CD4-positive, alpha-beta T cell (primary cell): ENCODE measurements at regions of chr5 and their contacts with region 1.

Region 1: GRCh38 chr5:59174248-59174844 is 591.5 kb downstream of the RAB3C start:
- DNase-seq: peak in 9 of 14 experiments; percentile 7 to 80 (median 26)
- ATAC-seq: peak; percentile 80
- H3K4me3 ChIP-seq: no peak overlapping the region
- H3K4me3 Mint-ChIP-seq: no peak overlapping the region
- H3K27ac ChIP-seq: no peak overlapping the region
- H3K27ac Mint-ChIP-seq: no peak overlapping the region
- H3K4me1 ChIP-seq: no peaks in the 10 kb centered on the region
- H3K4me1 Mint-ChIP-seq: peaks cover 5% of the 10 kb centered on the region
- H3K27me3 ChIP-seq: no peaks in the 10 kb centered on the region
- H3K27me3 Mint-ChIP-seq: no peaks in the 10 kb centered on the region
- CTCF ChIP-seq: peak; percentile 91

Region 2: DNA sequence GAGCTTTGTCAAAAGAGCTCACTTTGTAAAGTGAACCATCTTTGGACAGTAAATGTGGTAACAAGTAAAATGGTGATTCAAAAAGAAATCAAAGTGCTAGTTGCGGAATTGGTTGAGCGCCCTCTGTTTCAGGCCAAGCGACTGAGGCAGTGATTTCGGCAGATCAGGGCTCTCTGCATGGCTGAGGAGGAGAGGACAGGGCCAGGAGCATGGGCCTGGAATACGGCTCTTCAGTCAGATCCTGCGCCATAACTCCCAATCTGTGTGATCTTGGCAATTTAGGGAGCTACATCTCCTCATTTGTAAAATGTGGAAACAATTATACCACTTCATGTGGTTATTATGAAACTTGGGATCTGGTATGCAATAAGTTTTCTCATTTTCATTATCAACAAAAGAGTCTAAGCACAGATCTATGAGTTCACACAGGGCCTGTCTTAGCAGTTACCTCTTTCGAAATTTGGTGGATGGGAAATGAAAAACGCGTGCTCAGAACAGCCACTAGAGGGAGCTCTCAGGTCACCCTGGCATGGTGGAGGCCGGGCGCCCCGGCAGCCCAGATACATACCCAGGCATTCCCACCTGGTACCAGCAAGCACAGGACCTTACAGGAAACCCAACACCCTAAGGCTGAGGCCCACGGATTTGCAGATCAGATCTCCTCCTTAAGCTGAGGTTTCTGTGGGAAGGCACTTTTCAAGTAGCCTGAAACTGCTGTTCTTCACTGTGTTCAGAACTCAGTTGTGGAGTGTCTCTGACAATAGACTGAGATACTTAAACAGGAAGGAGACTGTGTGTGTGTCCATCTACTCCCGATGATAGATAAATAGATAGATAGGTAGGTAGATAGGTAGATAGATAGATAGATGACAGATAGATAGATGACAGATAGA is 287.8 kb before region 1 on chr5:
- CTCF ChIA-PET with region 1: interaction called, 17 read pairs
- POLR2A ChIA-PET with region 1: interaction called, 4 read pairs
- intact Hi-C with region 1: loop called (anchors 1 to 2 kb)
- DNase-seq: peak; percentile 36 to 83 (median 52)
- ATAC-seq: peak; percentile 81
- H3K4me3 ChIP-seq: no peak overlapping the region
- H3K4me3 Mint-ChIP-seq: no peak overlapping the region
- H3K27ac ChIP-seq: no peak overlapping the region
- H3K27ac Mint-ChIP-seq: no peak overlapping the region
- H3K4me1 ChIP-seq: peaks cover 20% of the 10 kb centered on the region
- H3K4me1 Mint-ChIP-seq: peaks cover 32% of the 10 kb centered on the region
- H3K27me3 ChIP-seq: peaks cover 0 to 4% of the 10 kb centered on the region in 2 experiments
- H3K27me3 Mint-ChIP-seq: peaks cover 5% of the 10 kb centered on the region
- CTCF ChIP-seq: peak; percentile 92

Region 3: DNA sequence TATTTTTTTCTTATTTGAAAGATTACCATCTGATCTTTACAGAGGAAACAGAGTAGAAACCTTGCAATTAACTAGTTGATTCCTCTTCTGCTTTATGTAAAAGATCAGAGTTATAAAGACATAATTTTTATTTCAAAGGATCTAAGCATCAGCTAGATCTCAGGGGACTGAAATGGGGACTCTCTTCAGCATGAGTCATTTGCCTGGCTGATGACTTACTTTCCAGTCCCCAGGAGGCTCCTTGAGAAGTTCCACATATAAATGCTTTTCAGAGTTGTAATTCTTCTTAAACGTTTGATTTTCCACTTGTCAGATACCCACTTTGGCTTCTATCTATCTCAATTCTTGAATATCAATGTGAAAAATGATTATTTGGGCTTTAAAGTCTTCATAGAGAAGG is 202.0 kb before region 1 on chr5:
- CTCF ChIA-PET with region 1: interaction called, 6 read pairs
- POLR2A ChIA-PET with region 1: no interaction called
- intact Hi-C with region 1: loop called in 1 of 2 experiments (anchors 5 kb)
- DNase-seq: no peak
- ATAC-seq: peak; percentile 19
- H3K4me3 ChIP-seq: no peak overlapping the region
- H3K4me3 Mint-ChIP-seq: no peak overlapping the region
- H3K27ac ChIP-seq: no peak overlapping the region
- H3K27ac Mint-ChIP-seq: no peak overlapping the region
- H3K4me1 ChIP-seq: no peaks in the 10 kb centered on the region
- H3K4me1 Mint-ChIP-seq: no peaks in the 10 kb centered on the region
- H3K27me3 ChIP-seq: no peaks in the 10 kb centered on the region
- H3K27me3 Mint-ChIP-seq: no peaks in the 10 kb centered on the region
- CTCF ChIP-seq: no peak

Region 4: DNA sequence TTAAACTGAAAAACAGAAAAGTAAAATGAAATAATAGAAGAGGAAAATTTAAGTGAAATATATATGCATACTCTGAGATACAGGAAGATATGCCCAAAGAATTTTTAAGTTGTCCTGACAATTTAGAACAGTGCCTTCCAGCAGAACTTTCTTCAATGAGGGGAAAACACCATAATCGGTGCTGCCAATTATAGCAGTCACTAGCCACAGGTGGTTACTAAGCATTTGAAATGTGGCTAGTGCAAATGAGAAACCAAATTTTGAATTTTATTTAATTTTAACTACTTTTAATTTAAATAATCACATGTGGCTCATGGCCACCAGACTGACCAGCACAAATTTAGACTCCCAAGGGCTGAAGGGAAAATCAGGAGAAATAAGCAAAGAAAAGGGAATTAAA is 180.9 kb before region 1 on chr5:
- CTCF ChIA-PET with region 1: interaction called, 4 read pairs
- POLR2A ChIA-PET with region 1: no interaction called
- intact Hi-C with region 1: loop called in 1 of 2 experiments (anchors 5 kb)
- DNase-seq: no peak
- ATAC-seq: no peak
- H3K4me3 ChIP-seq: no peak overlapping the region
- H3K4me3 Mint-ChIP-seq: no peak overlapping the region
- H3K27ac ChIP-seq: no peak overlapping the region
- H3K27ac Mint-ChIP-seq: no peak overlapping the region
- H3K4me1 ChIP-seq: no peaks in the 10 kb centered on the region
- H3K4me1 Mint-ChIP-seq: peaks cover 11% of the 10 kb centered on the region
- H3K27me3 ChIP-seq: no peaks in the 10 kb centered on the region
- H3K27me3 Mint-ChIP-seq: no peaks in the 10 kb centered on the region
- CTCF ChIP-seq: no peak

Region 5: GRCh38 chr5:59099270-59099994 is 74.9 kb before region 1 on chr5:
- CTCF ChIA-PET with region 1: interaction called, 3 read pairs
- POLR2A ChIA-PET with region 1: no interaction called
- intact Hi-C with region 1: loop called in 1 of 2 experiments (anchors 5 kb)
- DNase-seq: peak in 10 of 14 experiments; percentile 2 to 86 (median 20)
- ATAC-seq: peak; percentile 90
- H3K4me3 ChIP-seq: no peak overlapping the region
- H3K4me3 Mint-ChIP-seq: no peak overlapping the region
- H3K27ac ChIP-seq: peak overlapping the region in 1 of 2 donors; percentile 51
- H3K27ac Mint-ChIP-seq: peak overlapping the region; percentile 37
- H3K4me1 ChIP-seq: peaks cover 13% of the 10 kb centered on the region
- H3K4me1 Mint-ChIP-seq: peaks cover 35% of the 10 kb centered on the region
- H3K27me3 ChIP-seq: no peaks in the 10 kb centered on the region
- H3K27me3 Mint-ChIP-seq: no peaks in the 10 kb centered on the region
- CTCF ChIP-seq: no peak

Region 6: DNA sequence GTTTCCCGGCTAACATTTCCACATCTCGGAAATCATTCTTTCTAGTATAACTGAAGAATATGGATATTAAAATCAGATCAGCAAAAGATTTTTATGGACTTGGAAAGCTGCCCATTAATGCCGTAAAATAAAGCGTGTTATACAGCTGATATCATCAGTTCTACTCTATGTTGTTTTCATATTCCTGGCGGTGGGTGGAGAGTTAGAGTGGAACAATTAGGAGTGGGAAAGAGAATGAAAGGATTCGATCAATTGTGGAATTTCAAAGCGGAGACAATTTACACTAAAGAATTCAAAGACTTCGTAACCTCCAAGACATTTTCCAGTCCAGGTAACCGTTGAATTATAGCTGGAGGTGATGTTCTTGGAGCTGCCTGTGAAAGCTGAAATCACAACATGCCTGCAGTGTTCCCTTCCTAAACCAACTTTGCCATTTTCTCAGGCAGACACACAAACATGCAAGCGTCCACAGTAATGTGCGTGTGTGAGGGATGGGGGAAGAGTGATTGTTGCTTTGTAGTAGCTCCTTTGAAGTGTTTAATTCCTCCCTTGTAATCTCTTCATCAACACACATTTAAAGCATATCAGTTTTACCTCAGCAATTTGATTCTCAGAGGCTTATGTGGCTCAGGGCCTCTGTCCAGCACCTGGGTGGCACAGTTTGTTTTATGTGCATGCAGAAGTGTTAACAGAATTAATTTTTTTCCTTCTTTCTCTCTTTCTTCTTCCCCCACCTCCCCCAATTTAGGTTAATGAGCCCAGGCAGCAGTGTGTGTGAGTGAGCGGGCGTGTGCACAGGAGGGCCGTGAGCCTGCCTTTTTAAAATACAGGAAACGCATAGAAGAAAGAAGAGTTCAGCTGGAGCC is 47.4 kb before region 1 on chr5:
- CTCF ChIA-PET with region 1: interaction called, 19 read pairs
- POLR2A ChIA-PET with region 1: interaction called, 20 read pairs
- intact Hi-C with region 1: loop called (anchors 1 to 2 kb)
- DNase-seq: peak in 3 of 14 experiments; percentile 5 to 81 (median 75)
- ATAC-seq: peak; percentile 5
- H3K4me3 ChIP-seq: peak overlapping the region; percentile 51
- H3K4me3 Mint-ChIP-seq: no peak overlapping the region
- H3K27ac ChIP-seq: peak overlapping the region; percentile 56 to 68
- H3K27ac Mint-ChIP-seq: no peak overlapping the region
- H3K4me1 ChIP-seq: peaks cover 36% of the 10 kb centered on the region
- H3K4me1 Mint-ChIP-seq: peaks cover 13% of the 10 kb centered on the region
- H3K27me3 ChIP-seq: no peaks in the 10 kb centered on the region
- H3K27me3 Mint-ChIP-seq: no peaks in the 10 kb centered on the region
- CTCF ChIP-seq: no peak

Region 7: GRCh38 chr5:59188419-59189225 is 14.3 kb after region 1 on chr5:
- CTCF ChIA-PET with region 1: interaction called, 12 read pairs
- POLR2A ChIA-PET with region 1: no interaction called
- intact Hi-C with region 1: no loop called
- DNase-seq: peak; percentile 26 to 81 (median 48)
- ATAC-seq: peak; percentile 69
- H3K4me3 ChIP-seq: no peak overlapping the region
- H3K4me3 Mint-ChIP-seq: no peak overlapping the region
- H3K27ac ChIP-seq: no peak overlapping the region
- H3K27ac Mint-ChIP-seq: no peak overlapping the region
- H3K4me1 ChIP-seq: no peaks in the 10 kb centered on the region
- H3K4me1 Mint-ChIP-seq: peaks cover 5% of the 10 kb centered on the region
- H3K27me3 ChIP-seq: peaks cover 0 to 5% of the 10 kb centered on the region in 2 experiments
- H3K27me3 Mint-ChIP-seq: peaks cover 19% of the 10 kb centered on the region
- CTCF ChIP-seq: peak; percentile 95